Right ventricle myocardium inferior (tissue), 1 donor: ENCODE measurements at regions of chr1 and their contacts with region 1.

Region 1: GRCh38 chr1:15684468-15685291 is 560 bp downstream of the PLEKHM2 start:
- DNase-seq: peak; percentile 84
- ATAC-seq: peak; percentile 38

Region 2: DNA sequence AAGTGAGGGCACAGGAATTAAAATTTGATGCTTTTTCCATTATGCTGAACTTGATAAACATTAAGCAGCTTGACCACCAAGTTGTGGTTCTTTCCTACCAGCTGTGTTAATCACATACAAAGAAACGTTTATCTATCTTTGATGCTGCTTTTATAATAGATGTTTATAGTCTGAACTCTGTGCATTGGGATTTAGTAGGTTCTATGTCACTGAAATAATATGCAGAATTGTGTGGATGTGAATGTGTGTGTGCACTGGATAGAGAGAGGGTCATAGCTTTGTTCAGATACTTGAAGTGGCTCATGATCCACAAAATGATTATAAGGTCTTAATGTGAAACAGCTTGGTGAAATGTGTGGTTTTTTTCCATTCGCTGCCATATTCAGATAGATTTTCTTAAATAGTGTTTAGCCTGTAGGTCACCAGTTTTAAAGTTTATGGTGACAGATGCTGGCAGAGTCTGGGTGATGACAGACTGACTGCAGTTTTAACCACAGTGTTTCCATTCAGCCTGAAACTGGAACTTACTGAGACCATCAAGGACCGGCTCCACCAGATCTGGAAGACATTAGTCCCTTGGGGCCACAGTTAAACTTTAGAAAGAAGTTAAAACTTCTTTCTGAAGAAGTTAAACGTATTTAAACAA is 57.2 kb before region 1 on chr1:
- intact Hi-C with region 1: loop called (anchors 5 kb)
- DNase-seq: no peak
- ATAC-seq: peak; percentile 65

Region 3: GRCh38 chr1:15714406-15715136 is 29.9 kb after region 1 on chr1:
- intact Hi-C with region 1: loop called (anchors 5 kb)
- DNase-seq: no peak
- ATAC-seq: peak; percentile 84

Region 4: GRCh38 chr1:15736038-15736889 is 51.6 kb after region 1 on chr1 and contains the start of gene SLC25A34:
- intact Hi-C with region 1: loop called (anchors 5 kb)
- DNase-seq: peak; percentile 86
- ATAC-seq: peak; percentile 81
- total RNA-seq, gene SLC25A34: 57.2 TPM